GM18951 (cell line): ENCODE measurements at regions of chr1 and their contacts with region 1.

Region 1: GRCh38 chr1:47147047-47147785 is 10.0 kb downstream of the CYP4A22 start:
- POLR2A ChIP-seq: no peak

Region 2: DNA sequence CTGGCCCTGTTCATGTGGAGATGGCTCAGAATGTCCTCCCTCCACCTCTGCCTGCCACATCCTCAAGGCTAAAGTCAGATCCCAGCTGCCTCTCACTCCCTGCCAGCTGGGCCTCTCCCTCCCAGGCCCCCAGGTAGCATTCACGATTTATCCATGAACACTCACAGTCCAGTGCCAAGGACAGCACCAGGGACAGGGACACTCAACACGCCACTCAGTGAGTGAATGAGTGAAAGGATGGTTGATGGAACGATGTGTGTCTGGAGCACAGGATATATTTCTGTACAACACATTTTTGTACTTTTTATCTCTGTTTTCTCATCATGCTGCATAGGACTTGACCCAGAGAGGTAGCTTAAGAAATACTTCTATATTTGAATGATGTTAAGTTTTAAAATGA is 216.1 kb before region 1 on chr1:
- in situ Hi-C with region 1: loop called (anchors 5 kb)
- POLR2A ChIP-seq: no peak

Region 3: GRCh38 chr1:47371016-47371517 is 223.9 kb after region 1 on chr1:
- in situ Hi-C with region 1: no loop called
- POLR2A ChIP-seq: no peak